ENCODE measurements at regions of chr16 and their contacts with region 1.

Region 1: GRCh38 chr16:28553776-28554633 is at the start of gene SGF29:
- DNase-seq: peak; percentile 90 to 98
- ATAC-seq: peak; percentile 89 to 96 (median 92)
- H3K4me3 ChIP-seq: peak within 1 kb of the TSS; percentile 83
- H3K4me3 Mint-ChIP-seq: peak within 1 kb of the TSS; percentile 91
- H3K27ac ChIP-seq: peak within 1 kb of the TSS; percentile 96
- H3K27ac Mint-ChIP-seq: peak within 1 kb of the TSS; percentile 91 to 94
- H3K4me1 ChIP-seq: peaks cover 14% of the 10 kb centered on the region
- H3K4me1 Mint-ChIP-seq: peaks cover 8 to 30% of the 10 kb centered on the region in 2 donors
- H3K27me3 ChIP-seq: no peaks in the 10 kb centered on the region
- H3K27me3 Mint-ChIP-seq: no peaks in the 10 kb centered on the region
- CTCF ChIP-seq: peak; percentile 12
- total RNA-seq, gene SGF29: 31.6 to 45.1 (median 43.1) TPM

Region 2: GRCh38 chr16:28277537-28278388 is 276.2 kb before region 1 on chr16:
- intact Hi-C with region 1: loop called (anchors 5 kb)
- DNase-seq: peak; percentile 84 to 94
- ATAC-seq: peak; percentile 92 to 95 (median 94)
- H3K4me3 ChIP-seq: peak overlapping the region; percentile 28
- H3K4me3 Mint-ChIP-seq: peak overlapping the region; percentile 86
- H3K27ac ChIP-seq: no peak overlapping the region
- H3K27ac Mint-ChIP-seq: peak overlapping the region; percentile 81 to 84
- H3K4me1 ChIP-seq: peaks cover 31% of the 10 kb centered on the region
- H3K4me1 Mint-ChIP-seq: peaks cover 16 to 41% of the 10 kb centered on the region in 2 donors
- H3K27me3 ChIP-seq: no peaks in the 10 kb centered on the region
- H3K27me3 Mint-ChIP-seq: peaks cover 5 to 28% of the 10 kb centered on the region in 2 donors
- CTCF ChIP-seq: peak; percentile 96

Region 3: DNA sequence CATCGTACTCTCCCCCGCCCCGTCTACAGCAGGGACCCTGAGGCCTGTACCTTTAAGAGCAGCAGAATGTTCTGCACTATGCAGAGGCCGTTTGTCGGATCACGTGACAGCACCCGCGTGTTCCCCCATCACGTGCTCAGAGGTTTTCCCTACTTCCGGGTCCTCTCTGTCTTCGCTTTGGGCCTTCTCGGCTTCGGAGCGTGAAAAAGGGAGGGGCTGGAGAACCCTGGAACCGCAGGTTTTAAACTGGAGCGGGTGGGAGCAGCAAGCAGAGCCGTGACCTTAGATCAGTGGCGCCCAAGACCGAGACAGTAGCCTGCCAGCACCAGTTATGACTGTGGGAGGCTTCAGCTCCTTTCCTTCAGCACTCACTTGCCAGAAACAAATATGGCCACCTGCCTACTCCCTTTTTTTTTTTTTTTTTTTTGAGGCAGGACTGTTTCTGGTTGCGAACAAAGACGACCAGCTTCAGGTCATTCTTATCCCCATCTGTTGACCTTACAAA is 62.0 kb before region 1 on chr16 and contains the start of gene CLN3:
- intact Hi-C with region 1: loop called (anchors 2 kb)
- DNase-seq: peak; percentile 84 to 94
- ATAC-seq: peak; percentile 58 to 82 (median 69)
- H3K4me3 ChIP-seq: peak within 1 kb of the TSS; percentile 83
- H3K4me3 Mint-ChIP-seq: peak within 1 kb of the TSS; percentile 99
- H3K27ac ChIP-seq: peak within 1 kb of the TSS; percentile 96
- H3K27ac Mint-ChIP-seq: peak within 1 kb of the TSS; percentile 98 to 100
- H3K4me1 ChIP-seq: peaks cover 80% of the 10 kb centered on the region
- H3K4me1 Mint-ChIP-seq: peaks cover 45 to 74% of the 10 kb centered on the region in 2 donors
- H3K27me3 ChIP-seq: no peaks in the 10 kb centered on the region
- H3K27me3 Mint-ChIP-seq: no peaks in the 10 kb centered on the region
- CTCF ChIP-seq: no peak
- total RNA-seq, gene CLN3: 71.1 to 85.3 (median 84.7) TPM